GM13976 (cell line): ENCODE measurements at regions of chrX and their contacts with region 1.

Region 1: GRCh38 chrX:132615391-132616131 is 126.7 kb upstream of the MBNL3 start:
- DNase-seq: peak; percentile 10
- CTCF ChIP-seq: peak; percentile 37

Region 2: DNA sequence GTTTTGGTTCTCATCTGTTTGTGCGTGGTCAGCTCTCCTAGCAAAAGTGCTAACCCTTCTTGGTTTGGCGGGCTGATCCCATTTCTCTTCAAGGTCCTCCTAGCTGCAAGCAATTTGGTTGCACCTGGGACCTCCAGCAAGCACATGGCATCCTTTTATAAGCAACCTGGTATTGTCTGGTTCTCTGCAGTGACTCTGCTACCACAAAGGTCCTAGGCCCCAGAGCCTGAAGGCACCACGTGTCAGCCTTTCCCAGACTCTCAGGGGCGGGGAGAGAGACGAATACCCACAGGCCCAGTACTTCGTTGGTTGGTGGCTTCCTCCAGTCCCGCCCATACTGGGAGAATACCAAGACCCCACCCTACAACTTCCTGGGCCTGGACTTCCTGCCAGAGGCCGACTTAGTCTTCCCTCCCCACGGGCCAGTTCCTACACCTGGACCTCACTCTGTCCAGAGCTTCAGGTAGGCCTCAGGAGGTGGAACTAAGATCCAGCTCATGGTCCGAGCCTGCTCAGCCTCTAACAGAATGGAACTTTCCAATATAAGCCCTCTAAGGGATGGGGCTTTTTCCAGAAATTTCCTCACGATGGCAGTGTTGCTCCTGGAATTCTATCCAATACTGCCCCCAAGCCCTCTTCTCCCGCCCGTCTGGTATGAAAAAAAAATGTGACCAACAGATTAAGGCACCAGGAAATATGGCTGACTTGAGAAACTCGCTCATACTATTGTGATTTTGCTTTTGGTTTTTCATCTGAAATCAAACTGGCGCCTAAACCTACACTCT is 785.0 kb before region 1 on chrX:
- in situ Hi-C with region 1: loop called (anchors 25 kb)
- DNase-seq: no peak
- CTCF ChIP-seq: no peak

Region 3: GRCh38 chrX:132092439-132093065 is 523.0 kb before region 1 on chrX:
- in situ Hi-C with region 1: loop called (anchors 25 kb)
- DNase-seq: peak; percentile 43
- CTCF ChIP-seq: peak; percentile 78

Region 4: GRCh38 chrX:132171478-132172260 is 443.9 kb before region 1 on chrX:
- in situ Hi-C with region 1: no loop called
- DNase-seq: no peak
- CTCF ChIP-seq: no peak

Region 5: DNA sequence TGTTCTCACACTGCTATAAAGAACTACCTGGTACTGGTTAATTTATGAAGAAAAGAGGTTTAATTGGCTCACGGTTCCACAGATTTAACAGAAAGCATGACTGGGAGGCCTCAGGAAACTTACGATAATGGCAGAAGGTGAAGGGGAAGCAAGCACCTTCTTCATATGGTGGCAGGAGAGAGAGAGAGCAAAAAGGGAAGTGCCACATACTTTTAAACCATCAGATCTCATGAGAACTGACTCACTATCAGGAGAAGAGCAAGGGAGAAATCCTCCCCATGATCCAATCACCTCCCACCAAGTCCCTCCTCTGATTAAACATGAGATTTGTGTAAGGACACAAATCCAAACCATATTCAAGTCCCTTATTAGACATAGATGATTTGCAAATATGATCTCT is 384.0 kb before region 1 on chrX:
- in situ Hi-C with region 1: loop called (anchors 10 kb)
- DNase-seq: no peak
- CTCF ChIP-seq: no peak

Region 6: GRCh38 chrX:132532955-132533354 is 82.6 kb before region 1 on chrX:
- in situ Hi-C with region 1: no loop called
- DNase-seq: no peak
- CTCF ChIP-seq: no peak